IMR-90 (cell line): ENCODE measurements at regions of chr6 and their contacts with region 1.

Region 1: DNA sequence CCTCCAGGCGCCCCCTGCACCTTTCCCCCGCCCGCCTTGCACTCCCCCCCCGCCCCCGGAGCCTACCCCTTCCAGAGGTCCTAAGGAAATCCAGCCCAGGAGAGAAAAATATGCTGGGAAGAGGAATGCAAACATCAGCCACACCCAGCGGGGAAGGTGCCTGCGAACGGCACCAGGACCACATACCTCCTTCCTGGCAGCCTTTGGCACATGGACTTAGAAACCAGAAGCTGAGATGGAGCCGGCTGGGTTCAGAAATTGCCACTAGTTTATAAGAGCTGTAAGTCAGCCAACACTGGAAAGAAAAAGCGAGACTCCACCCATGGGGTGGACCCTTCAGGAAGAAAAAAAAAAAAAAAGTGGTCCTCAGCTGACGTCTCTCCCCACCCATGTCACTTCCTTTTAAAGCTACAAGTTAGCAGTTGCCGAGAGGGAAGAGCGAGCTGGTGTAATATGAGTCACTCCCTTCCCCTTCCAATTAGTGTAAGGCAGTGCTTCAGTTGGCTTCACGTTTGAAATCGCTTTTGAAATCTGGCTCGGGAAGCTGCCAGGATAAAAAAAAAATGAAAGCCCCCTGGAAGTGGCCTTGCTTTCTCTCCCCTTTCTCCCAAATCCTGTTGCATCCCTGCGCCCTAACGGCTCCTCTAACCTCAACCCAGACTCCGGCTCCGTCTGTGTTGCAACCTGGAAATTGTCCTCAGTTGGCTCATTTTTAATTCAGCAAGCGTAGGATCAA is at the start of gene AGPAT4:
- DNase-seq: peak; percentile 98
- ATAC-seq: peak; percentile 97
- H3K4me3 ChIP-seq: peak within 1 kb of the TSS; percentile 68
- H3K27ac ChIP-seq: peak within 1 kb of the TSS; percentile 70
- H3K4me1 ChIP-seq: 0 out of 2 replicates have a peak, but pooled peaks cover 1% of the 10 kb centered on the region
- H3K27me3 ChIP-seq: no peaks in the 10 kb centered on the region
- CTCF ChIP-seq: no peak
- POLR2A ChIP-seq: peak; percentile 96
- RAD21 ChIP-seq: peak; percentile 8; the same call in 1 of the 2 replicates
- total RNA-seq, gene AGPAT4: 3.6 and 3.8 TPM in 2 replicates

Region 2: GRCh38 chr6:160930547-160931377 is 343.2 kb before region 1 on chr6:
- CTCF ChIA-PET with region 1: no interaction called
- POLR2A ChIA-PET with region 1: no interaction called
- dilution Hi-C with region 1: no loop called
- in situ Hi-C with region 1: no loop called
- intact Hi-C with region 1: loop called (anchors 1 kb)
- DNase-seq: peak; percentile 71
- ATAC-seq: peak; percentile 99
- H3K4me3 ChIP-seq: peak overlapping the region; percentile 46
- H3K27ac ChIP-seq: no peak overlapping the region
- H3K4me1 ChIP-seq: no peaks in the 10 kb centered on the region
- H3K27me3 ChIP-seq: no peaks in the 10 kb centered on the region
- CTCF ChIP-seq: peak; percentile 97
- POLR2A ChIP-seq: peak; percentile 45; the same call in 1 of the 2 replicates
- RAD21 ChIP-seq: peak; percentile 98

Region 3: GRCh38 chr6:160992061-160992979 is 281.6 kb before region 1 on chr6:
- CTCF ChIA-PET with region 1: interaction called, 3 read pairs
- POLR2A ChIA-PET with region 1: no interaction called
- dilution Hi-C with region 1: no loop called
- in situ Hi-C with region 1: loop called (anchors 25 kb)
- intact Hi-C with region 1: loop called (anchors 1 kb)
- DNase-seq: peak; percentile 70
- ATAC-seq: peak; percentile 57
- H3K4me3 ChIP-seq: peak overlapping the region; percentile 95
- H3K27ac ChIP-seq: peak overlapping the region; percentile 84
- H3K4me1 ChIP-seq: no peaks in the 10 kb centered on the region; the same call in 1 of the 2 replicates
- H3K27me3 ChIP-seq: no peaks in the 10 kb centered on the region
- CTCF ChIP-seq: peak; percentile 63
- POLR2A ChIP-seq: peak; percentile 80; the same call in 1 of the 2 replicates
- RAD21 ChIP-seq: peak; percentile 67

Region 4: DNA sequence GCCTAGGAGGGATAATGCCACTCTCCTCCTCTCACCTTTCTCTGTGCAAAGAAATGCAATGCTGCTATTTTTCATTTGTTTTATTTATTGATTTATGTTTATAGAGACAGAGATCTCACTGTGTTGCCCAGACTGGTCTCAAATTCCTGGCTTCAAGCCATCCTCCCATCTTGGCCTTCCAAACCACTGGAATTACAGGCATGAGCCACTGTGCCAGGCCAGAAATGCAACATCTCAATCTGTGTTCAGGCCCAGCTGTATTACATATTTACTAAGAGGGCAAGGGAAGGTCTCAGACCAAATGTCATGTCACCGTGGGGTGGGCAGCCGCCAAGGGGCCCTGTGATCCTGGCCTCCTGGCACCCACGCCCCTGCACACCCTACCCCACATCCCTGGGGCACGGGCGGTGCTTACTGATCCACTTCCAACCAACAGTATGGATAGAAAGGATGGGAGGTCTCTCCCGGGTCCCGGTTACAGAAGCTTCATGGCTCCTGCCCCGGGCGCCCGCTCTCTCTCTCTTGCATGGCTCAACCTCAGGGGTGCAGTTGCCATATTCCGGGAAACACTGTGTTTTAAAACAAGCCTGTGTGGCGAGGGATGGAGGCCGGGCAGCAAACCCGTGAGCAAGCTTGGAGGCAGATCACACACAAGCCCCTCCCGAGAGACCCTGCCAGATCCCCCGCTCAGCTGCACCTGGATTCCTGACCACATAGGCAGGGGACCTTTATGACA is 111.9 kb before region 1 on chr6:
- CTCF ChIA-PET with region 1: no interaction called
- POLR2A ChIA-PET with region 1: no interaction called
- dilution Hi-C with region 1: no loop called
- in situ Hi-C with region 1: loop called (anchors 10 kb)
- intact Hi-C with region 1: loop called (anchors 2 kb)
- DNase-seq: peak; percentile 59
- ATAC-seq: peak; percentile 55
- H3K4me3 ChIP-seq: no peak overlapping the region
- H3K27ac ChIP-seq: no peak overlapping the region
- H3K4me1 ChIP-seq: peaks cover 8% of the 10 kb centered on the region
- H3K27me3 ChIP-seq: no peaks in the 10 kb centered on the region
- CTCF ChIP-seq: no peak
- POLR2A ChIP-seq: no peak
- RAD21 ChIP-seq: no peak

Region 5: GRCh38 chr6:161218222-161218621 is 55.7 kb before region 1 on chr6:
- CTCF ChIA-PET with region 1: no interaction called
- POLR2A ChIA-PET with region 1: no interaction called
- dilution Hi-C with region 1: no loop called
- in situ Hi-C with region 1: no loop called
- intact Hi-C with region 1: no loop called
- DNase-seq: no peak
- ATAC-seq: no peak
- H3K4me3 ChIP-seq: no peak overlapping the region
- H3K27ac ChIP-seq: no peak overlapping the region
- H3K4me1 ChIP-seq: peaks cover 6% of the 10 kb centered on the region
- H3K27me3 ChIP-seq: no peaks in the 10 kb centered on the region
- CTCF ChIP-seq: no peak; the same call in 1 of the 2 replicates
- POLR2A ChIP-seq: no peak
- RAD21 ChIP-seq: no peak

Region 6: GRCh38 chr6:161228921-161229591 is 44.9 kb before region 1 on chr6:
- CTCF ChIA-PET with region 1: interaction called, 4 read pairs
- POLR2A ChIA-PET with region 1: no interaction called
- dilution Hi-C with region 1: no loop called
- in situ Hi-C with region 1: no loop called
- intact Hi-C with region 1: loop called (anchors 2 kb)
- DNase-seq: peak; percentile 95
- ATAC-seq: peak; percentile 93
- H3K4me3 ChIP-seq: no peak overlapping the region
- H3K27ac ChIP-seq: peak overlapping the region; percentile 63
- H3K4me1 ChIP-seq: peaks cover 25% of the 10 kb centered on the region
- H3K27me3 ChIP-seq: no peaks in the 10 kb centered on the region
- CTCF ChIP-seq: no peak
- POLR2A ChIP-seq: peak; percentile 57
- RAD21 ChIP-seq: peak; percentile 28; the same call in 1 of the 2 replicates

Region 7: GRCh38 chr6:161308075-161308655 is 34.2 kb after region 1 on chr6:
- CTCF ChIA-PET with region 1: no interaction called
- POLR2A ChIA-PET with region 1: no interaction called
- dilution Hi-C with region 1: no loop called
- in situ Hi-C with region 1: no loop called
- intact Hi-C with region 1: no loop called
- DNase-seq: no peak
- ATAC-seq: no peak
- H3K4me3 ChIP-seq: no peak overlapping the region
- H3K27ac ChIP-seq: no peak overlapping the region
- H3K4me1 ChIP-seq: 0 out of 2 replicates have a peak, but pooled peaks cover 2% of the 10 kb centered on the region
- H3K27me3 ChIP-seq: no peaks in the 10 kb centered on the region
- CTCF ChIP-seq: no peak
- POLR2A ChIP-seq: no peak
- RAD21 ChIP-seq: no peak